ENCODE measurements at regions of chr22 and their contacts with region 1.

Region 1: DNA sequence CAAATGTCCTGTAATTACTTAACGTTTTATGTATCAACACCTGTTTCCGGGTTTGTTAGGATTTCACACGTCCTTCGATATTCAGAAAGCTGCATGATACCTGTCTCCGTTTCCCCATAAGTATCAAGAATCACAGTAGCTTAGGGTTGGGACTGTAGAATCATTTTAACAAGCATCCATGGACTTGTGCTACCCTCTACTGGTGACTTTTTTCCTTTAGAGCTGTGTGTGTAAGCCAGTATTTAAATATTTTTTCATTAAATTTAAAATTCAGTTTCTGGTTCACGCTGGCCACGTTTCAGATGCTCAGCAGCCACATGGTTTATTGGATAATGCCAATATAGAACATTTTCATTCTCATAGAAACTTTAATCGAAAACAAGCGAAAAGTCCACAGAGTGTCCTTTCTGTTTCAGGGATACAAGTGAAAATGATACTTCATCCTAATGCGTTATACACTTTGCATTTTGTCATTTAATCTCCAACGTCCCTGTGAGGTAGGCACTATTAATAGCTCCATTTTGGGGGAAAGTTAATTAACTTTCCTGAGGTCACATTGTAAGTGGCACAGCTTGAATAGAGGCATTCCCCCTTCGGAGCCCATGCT is 61.5 kb upstream of the SLC25A18 start:
- DNase-seq: peak; percentile 54
- ATAC-seq: peak; percentile 65
- H3K4me3 Mint-ChIP-seq: no peak overlapping the region
- H3K27ac Mint-ChIP-seq: no peak overlapping the region
- H3K4me1 Mint-ChIP-seq: no peaks in the 10 kb centered on the region
- H3K27me3 Mint-ChIP-seq: peaks cover 2% of the 10 kb centered on the region

Region 2: GRCh38 chr22:17077255-17077654 is 424.5 kb before region 1 on chr22:
- CTCF ChIA-PET with region 1: interaction called, 55 read pairs
- POLR2A ChIA-PET with region 1: no interaction called
- DNase-seq: no peak
- ATAC-seq: no peak
- H3K4me3 Mint-ChIP-seq: no peak overlapping the region
- H3K27ac Mint-ChIP-seq: no peak overlapping the region
- H3K4me1 Mint-ChIP-seq: peaks cover 16% of the 10 kb centered on the region
- H3K27me3 Mint-ChIP-seq: peaks cover 23% of the 10 kb centered on the region

Region 3: DNA sequence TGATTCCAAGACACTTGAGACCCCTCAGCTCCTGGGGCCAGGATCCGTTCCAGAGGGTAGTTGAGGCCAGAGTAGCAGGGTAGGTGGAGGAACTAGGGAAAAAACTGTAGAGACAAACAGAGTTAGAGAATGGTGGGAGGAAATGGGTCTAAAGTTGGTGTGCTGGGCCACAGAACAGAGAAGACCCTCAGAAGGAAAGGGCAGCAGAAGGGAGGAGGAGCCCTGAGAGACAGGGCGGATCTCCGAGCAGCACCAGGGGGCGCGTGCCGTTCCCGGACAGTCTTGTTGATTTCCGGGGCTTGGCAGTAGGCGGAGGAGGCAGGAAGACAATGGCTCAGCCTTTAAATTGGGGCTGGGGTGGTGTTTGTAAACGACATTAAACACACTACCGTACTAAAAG is 135.0 kb before region 1 on chr22:
- CTCF ChIA-PET with region 1: interaction called, 14 read pairs
- POLR2A ChIA-PET with region 1: no interaction called
- DNase-seq: peak; percentile 54
- ATAC-seq: peak; percentile 50
- H3K4me3 Mint-ChIP-seq: no peak overlapping the region
- H3K27ac Mint-ChIP-seq: no peak overlapping the region
- H3K4me1 Mint-ChIP-seq: peaks cover 15% of the 10 kb centered on the region
- H3K27me3 Mint-ChIP-seq: peaks cover 42% of the 10 kb centered on the region